CD4-positive, alpha-beta memory T cell (primary cell): ENCODE measurements at regions of chr13 and their contacts with region 1.

Region 1: DNA sequence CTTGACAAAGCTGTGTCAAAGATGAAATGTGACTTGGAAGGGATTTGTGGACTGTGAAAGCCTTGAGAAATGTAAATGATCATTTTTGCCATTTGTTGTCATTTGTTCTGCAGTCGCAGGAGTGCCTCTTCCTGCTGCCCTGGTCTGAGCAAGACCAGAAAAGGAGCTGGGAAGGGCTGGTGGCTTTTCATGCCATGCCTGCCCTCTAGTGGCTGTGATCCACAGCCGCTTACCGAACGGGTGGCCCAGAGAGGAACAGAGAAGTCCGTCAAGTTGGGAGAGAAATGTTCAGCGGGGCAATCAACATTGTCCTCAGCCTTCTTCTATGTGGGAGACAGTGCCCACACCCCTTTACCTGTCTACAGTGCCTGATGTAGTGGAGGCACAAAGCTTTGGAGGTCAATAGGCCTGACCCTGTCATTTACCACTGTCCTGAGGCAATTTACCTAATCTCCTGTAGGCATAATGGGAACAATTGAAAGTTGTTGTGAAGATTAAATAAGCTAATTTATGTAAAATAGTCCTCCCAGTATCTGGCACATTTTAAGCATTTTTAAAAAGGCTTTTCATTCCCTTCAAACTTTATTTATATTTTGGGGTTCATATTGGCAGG is 224.4 kb downstream of the B3GLCT start:
- DNase-seq: peak; percentile 29 to 48 (median 42)
- H3K4me3 ChIP-seq: no peak overlapping the region
- H3K4me3 Mint-ChIP-seq: no peak overlapping the region
- H3K27ac ChIP-seq: no peak overlapping the region
- H3K27ac Mint-ChIP-seq: no peak overlapping the region
- H3K4me1 ChIP-seq: peaks cover 6% of the 10 kb centered on the region
- H3K4me1 Mint-ChIP-seq: peaks cover 0 to 3% (median 1%) of the 10 kb centered on the region in 4 donors
- H3K27me3 ChIP-seq: no peaks in the 10 kb centered on the region
- H3K27me3 Mint-ChIP-seq: peaks cover 5% of the 10 kb centered on the region in 2 donors

Region 2: GRCh38 chr13:30978981-30979956 is 445.0 kb before region 1 on chr13:
- CTCF ChIA-PET with region 1: no interaction called
- POLR2A ChIA-PET with region 1: no interaction called
- intact Hi-C with region 1: loop called (anchors 5 kb)
- DNase-seq: peak in 4 of 5 donors; percentile 6 to 17 (median 12)
- H3K4me3 ChIP-seq: no peak overlapping the region
- H3K4me3 Mint-ChIP-seq: no peak overlapping the region
- H3K27ac ChIP-seq: no peak overlapping the region
- H3K27ac Mint-ChIP-seq: no peak overlapping the region
- H3K4me1 ChIP-seq: no peaks in the 10 kb centered on the region
- H3K4me1 Mint-ChIP-seq: no peaks in the 10 kb centered on the region
- H3K27me3 ChIP-seq: no peaks in the 10 kb centered on the region
- H3K27me3 Mint-ChIP-seq: peaks cover 3 to 6% of the 10 kb centered on the region in 2 donors

Region 3: GRCh38 chr13:31199849-31200636 is 224.2 kb before region 1 on chr13 and contains the start of gene B3GLCT:
- CTCF ChIA-PET with region 1: interaction called, 3 read pairs
- POLR2A ChIA-PET with region 1: no interaction called
- intact Hi-C with region 1: loop called (anchors 1 kb)
- DNase-seq: peak; percentile 74 to 86 (median 84)
- H3K4me3 ChIP-seq: peak within 1 kb of the TSS; percentile 19 to 60
- H3K4me3 Mint-ChIP-seq: peak within 1 kb of the TSS; percentile 83 to 90 (median 88)
- H3K27ac ChIP-seq: peak within 1 kb of the TSS; percentile 83
- H3K27ac Mint-ChIP-seq: peak within 1 kb of the TSS; percentile 90 to 96 (median 91)
- H3K4me1 ChIP-seq: peaks cover 13% of the 10 kb centered on the region
- H3K4me1 Mint-ChIP-seq: peaks cover 19 to 23% (median 22%) of the 10 kb centered on the region in 4 donors
- H3K27me3 ChIP-seq: no peaks in the 10 kb centered on the region
- H3K27me3 Mint-ChIP-seq: no peaks in the 10 kb centered on the region
- total RNA-seq, gene B3GLCT: 5.2 to 5.8 TPM

Region 4: DNA sequence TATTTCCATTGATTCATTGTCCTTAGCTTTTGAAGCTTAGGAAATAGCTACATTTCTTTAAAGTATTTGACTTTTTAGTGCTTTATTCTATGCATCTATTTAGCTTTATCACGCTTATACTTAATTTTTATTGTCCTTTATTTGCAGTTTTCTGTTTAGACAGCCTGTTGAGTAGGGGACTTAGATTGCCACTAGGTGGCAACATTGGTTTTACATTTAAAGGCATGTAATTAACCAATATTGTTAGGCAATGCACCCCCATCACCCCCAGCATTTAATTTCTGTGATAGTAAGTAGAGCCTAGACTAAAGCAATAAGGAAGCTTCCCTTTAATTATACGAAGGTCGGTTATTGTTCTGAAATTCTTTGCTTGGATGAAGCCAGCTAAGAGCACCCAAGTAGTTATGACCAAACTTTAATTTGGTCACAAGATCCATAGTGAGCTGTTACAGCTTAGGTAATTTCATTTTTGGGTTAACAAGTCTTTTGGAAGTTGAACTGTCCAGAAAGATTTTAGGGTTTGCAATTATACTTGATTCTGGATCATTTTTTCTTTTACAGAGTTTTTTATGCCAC is 187.9 kb before region 1 on chr13:
- CTCF ChIA-PET with region 1: interaction called, 84 read pairs
- POLR2A ChIA-PET with region 1: no interaction called
- intact Hi-C with region 1: no loop called
- DNase-seq: peak in 4 of 5 donors; percentile 4 to 27 (median 8)
- H3K4me3 ChIP-seq: no peak overlapping the region
- H3K4me3 Mint-ChIP-seq: no peak overlapping the region
- H3K27ac ChIP-seq: no peak overlapping the region
- H3K27ac Mint-ChIP-seq: no peak overlapping the region
- H3K4me1 ChIP-seq: no peaks in the 10 kb centered on the region
- H3K4me1 Mint-ChIP-seq: peaks cover 0 to 4% (median 1%) of the 10 kb centered on the region in 4 donors
- H3K27me3 ChIP-seq: no peaks in the 10 kb centered on the region
- H3K27me3 Mint-ChIP-seq: no peaks in the 10 kb centered on the region

Region 5: DNA sequence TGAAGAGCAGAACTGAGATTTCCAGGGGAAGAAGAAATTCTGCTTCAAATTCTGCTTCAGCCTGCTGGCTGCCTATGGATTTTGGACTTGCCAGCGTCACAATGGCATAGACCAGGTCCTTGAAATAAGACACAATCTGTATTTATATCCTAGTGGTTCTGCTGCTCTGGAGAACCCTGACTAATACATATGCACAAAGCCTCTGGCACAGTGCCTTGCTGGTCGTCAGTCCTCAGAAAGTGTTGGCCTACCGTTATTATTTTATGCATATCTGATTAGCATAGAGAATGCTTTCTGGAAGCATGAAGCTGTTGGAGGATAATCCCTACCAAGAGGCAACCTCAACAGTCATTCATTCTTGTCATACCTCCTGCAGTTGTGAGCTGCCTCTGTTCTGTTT is 10.7 kb before region 1 on chr13:
- CTCF ChIA-PET with region 1: interaction called, 13 read pairs
- POLR2A ChIA-PET with region 1: no interaction called
- intact Hi-C with region 1: no loop called
- DNase-seq: no peak
- H3K4me3 ChIP-seq: no peak overlapping the region
- H3K4me3 Mint-ChIP-seq: no peak overlapping the region
- H3K27ac ChIP-seq: no peak overlapping the region
- H3K27ac Mint-ChIP-seq: no peak overlapping the region
- H3K4me1 ChIP-seq: no peaks in the 10 kb centered on the region
- H3K4me1 Mint-ChIP-seq: no peaks in the 10 kb centered on the region
- H3K27me3 ChIP-seq: no peaks in the 10 kb centered on the region
- H3K27me3 Mint-ChIP-seq: peaks cover 0 to 3% of the 10 kb centered on the region in 2 donors